GM12878 (cell line): ENCODE measurements at regions of chr13 and their contacts with region 1.

Region 1: DNA sequence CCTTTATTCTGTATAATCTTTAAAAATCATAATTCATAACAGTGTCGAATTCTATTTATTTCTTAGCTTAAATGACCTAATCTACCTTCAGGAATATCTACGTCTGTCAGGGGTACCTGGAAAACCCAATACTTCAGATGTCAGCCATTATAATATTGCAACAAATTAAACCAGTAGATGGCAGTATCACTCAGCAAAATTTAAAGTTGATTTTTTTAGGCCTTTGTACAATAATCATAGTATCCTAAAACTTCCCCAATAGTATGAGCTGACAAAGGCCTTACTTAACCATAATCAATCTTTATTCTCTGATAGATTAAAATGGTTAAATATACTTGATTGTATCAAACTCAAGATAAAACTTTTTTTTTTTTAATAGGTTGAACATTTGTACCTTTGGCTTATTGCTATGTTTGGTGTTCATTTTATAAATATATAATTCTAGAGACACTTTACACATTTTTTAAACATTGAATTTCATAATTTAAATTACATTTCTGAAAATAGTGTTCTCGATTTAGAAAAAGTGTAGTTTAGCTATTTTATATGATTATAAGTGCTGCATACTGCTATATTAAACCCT is 830.2 kb upstream of the SPRY2 start:
- DNase-seq: no peak
- ATAC-seq: peak; percentile 76
- H3K4me3 ChIP-seq: no peak overlapping the region
- H3K27ac ChIP-seq: no peak overlapping the region
- H3K4me1 ChIP-seq: no peaks in the 10 kb centered on the region
- H3K27me3 ChIP-seq: no peaks in the 10 kb centered on the region
- CTCF ChIP-seq: peak; percentile 34 to 56 (median 35); a peak in 4 of 6 replicates
- EP300 ChIP-seq: no peak
- POLR2A ChIP-seq: no peak
- RAD21 ChIP-seq: peak; percentile 49

Region 2: DNA sequence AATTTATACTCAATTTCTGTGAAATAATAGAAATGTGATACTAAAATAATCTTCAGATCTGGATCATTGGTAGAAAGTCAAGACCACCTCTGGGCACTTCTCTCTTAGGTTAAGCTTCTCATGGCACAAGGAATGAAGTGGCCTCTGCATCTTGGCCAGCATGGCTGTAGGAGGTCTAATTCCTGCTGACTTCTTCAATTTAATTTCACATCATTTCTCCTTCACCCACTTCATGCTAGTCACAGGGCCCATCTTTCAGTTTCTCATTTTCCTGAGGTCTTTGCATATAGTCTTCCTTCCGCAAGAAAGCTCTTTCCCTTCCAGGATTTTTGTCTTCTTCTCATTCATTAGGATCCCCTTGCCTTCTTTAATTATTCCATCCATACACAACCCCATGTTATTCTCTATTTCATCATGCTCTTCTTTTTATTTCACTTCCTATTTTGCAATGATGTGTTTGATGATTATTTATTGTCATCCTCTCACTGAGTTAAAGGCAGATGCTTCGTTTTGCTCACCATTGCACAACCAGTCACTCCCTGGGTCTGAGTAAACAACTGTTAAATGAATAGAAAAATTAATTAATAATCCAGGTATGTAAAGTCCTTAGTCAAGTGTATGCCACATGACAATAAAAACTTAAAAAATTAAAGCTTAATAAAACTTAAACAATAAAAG is 1227.7 kb before region 1 on chr13:
- CTCF ChIA-PET with region 1: no interaction called
- POLR2A ChIA-PET with region 1: no interaction called
- RAD21 ChIA-PET with region 1: no interaction called
- SMC1A ChIA-PET with region 1: no interaction called
- in situ Hi-C with region 1: no loop called
- intact Hi-C with region 1: no loop called
- DNase-seq: no peak
- ATAC-seq: no peak
- H3K4me3 ChIP-seq: no peak overlapping the region
- H3K27ac ChIP-seq: no peak overlapping the region
- H3K4me1 ChIP-seq: no peaks in the 10 kb centered on the region
- H3K27me3 ChIP-seq: no peaks in the 10 kb centered on the region
- CTCF ChIP-seq: no peak
- EP300 ChIP-seq: no peak
- POLR2A ChIP-seq: no peak
- RAD21 ChIP-seq: no peak

Region 3: DNA sequence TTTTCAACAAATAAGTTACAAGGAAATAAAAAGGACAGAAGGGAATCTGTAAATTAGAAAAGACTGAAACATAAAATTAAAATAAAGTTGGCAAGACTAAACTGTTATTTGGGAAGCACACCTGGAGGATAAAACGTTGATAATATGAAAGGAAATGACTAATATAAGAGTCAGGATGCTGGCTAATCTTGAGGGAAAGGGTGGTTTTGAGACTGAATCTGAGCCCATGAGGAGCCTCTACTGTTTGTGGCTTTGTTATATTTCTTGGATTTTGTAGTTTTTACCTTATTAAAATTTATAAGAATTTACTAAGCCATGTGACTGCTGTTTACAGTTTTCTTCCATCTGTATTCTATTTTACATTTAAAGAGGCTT is 112.3 kb before region 1 on chr13:
- CTCF ChIA-PET with region 1: interaction called, 17 read pairs
- POLR2A ChIA-PET with region 1: no interaction called
- RAD21 ChIA-PET with region 1: interaction called, 6 read pairs
- SMC1A ChIA-PET with region 1: interaction called, 16 read pairs
- in situ Hi-C with region 1: no loop called
- intact Hi-C with region 1: loop called (anchors 2 kb)
- DNase-seq: no peak
- ATAC-seq: no peak
- H3K4me3 ChIP-seq: no peak overlapping the region
- H3K27ac ChIP-seq: no peak overlapping the region
- H3K4me1 ChIP-seq: no peaks in the 10 kb centered on the region
- H3K27me3 ChIP-seq: no peaks in the 10 kb centered on the region
- CTCF ChIP-seq: no peak
- EP300 ChIP-seq: no peak
- POLR2A ChIP-seq: no peak
- RAD21 ChIP-seq: no peak

Region 4: GRCh38 chr13:81295177-81295576 is 124.0 kb after region 1 on chr13:
- CTCF ChIA-PET with region 1: interaction called, 7 read pairs
- POLR2A ChIA-PET with region 1: no interaction called
- RAD21 ChIA-PET with region 1: no interaction called
- SMC1A ChIA-PET with region 1: interaction called, 18 read pairs
- in situ Hi-C with region 1: no loop called
- intact Hi-C with region 1: no loop called
- DNase-seq: no peak
- ATAC-seq: peak; percentile 26
- H3K4me3 ChIP-seq: no peak overlapping the region
- H3K27ac ChIP-seq: no peak overlapping the region
- H3K4me1 ChIP-seq: no peaks in the 10 kb centered on the region
- H3K27me3 ChIP-seq: no peaks in the 10 kb centered on the region
- CTCF ChIP-seq: no peak
- EP300 ChIP-seq: no peak
- POLR2A ChIP-seq: no peak
- RAD21 ChIP-seq: no peak

Region 5: DNA sequence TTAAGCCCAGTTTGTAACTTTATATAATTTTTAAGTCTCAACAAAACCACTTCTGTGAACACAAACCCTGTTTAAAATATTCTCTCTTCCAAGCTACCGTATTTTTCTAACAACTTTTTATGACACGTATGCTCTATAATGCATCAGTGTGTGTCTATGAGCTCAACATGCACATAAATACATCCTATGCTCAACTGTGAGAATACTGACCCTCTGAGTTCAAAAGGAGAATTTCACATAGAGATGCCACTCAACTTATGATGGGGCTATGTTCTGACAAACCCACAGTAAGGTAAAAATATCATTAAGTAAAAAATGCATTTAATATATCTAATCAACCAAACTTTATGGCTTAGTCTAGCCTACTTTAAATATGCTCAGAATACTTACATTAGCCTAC is 309.5 kb after region 1 on chr13:
- CTCF ChIA-PET with region 1: interaction called, 38 read pairs
- POLR2A ChIA-PET with region 1: no interaction called
- RAD21 ChIA-PET with region 1: interaction called, 30 read pairs
- SMC1A ChIA-PET with region 1: interaction called, 39 read pairs
- in situ Hi-C with region 1: no loop called
- intact Hi-C with region 1: loop called (anchors 5 kb)
- DNase-seq: no peak
- ATAC-seq: peak; percentile 72
- H3K4me3 ChIP-seq: no peak overlapping the region
- H3K27ac ChIP-seq: no peak overlapping the region
- H3K4me1 ChIP-seq: no peaks in the 10 kb centered on the region
- H3K27me3 ChIP-seq: no peaks in the 10 kb centered on the region
- CTCF ChIP-seq: no peak; a peak in 1 of 6 replicates
- EP300 ChIP-seq: no peak
- POLR2A ChIP-seq: no peak
- RAD21 ChIP-seq: no peak

Region 6: DNA sequence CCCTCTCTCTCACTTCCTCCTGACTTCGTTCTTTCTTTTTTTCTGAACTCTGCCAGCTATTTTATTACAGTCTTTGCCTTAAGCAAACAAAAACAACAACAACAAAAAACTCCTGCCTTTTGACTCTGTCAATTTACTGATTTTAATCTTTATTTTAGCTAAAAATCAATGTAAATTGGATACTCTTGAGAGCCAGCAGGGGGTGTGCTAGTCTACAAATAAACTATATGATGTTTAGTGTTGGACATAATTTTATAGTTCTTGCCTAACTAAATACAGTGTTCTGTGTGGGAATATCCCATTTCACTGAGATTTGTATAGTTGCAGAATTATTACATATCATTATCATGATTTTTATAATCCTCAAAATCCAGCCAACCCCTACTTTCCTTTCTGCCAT is 369.6 kb after region 1 on chr13:
- CTCF ChIA-PET with region 1: interaction called, 14 read pairs
- POLR2A ChIA-PET with region 1: no interaction called
- RAD21 ChIA-PET with region 1: no interaction called
- SMC1A ChIA-PET with region 1: interaction called, 11 read pairs
- in situ Hi-C with region 1: no loop called
- intact Hi-C with region 1: no loop called
- DNase-seq: no peak
- ATAC-seq: peak; percentile 54
- H3K4me3 ChIP-seq: no peak overlapping the region
- H3K27ac ChIP-seq: no peak overlapping the region
- H3K4me1 ChIP-seq: no peaks in the 10 kb centered on the region
- H3K27me3 ChIP-seq: no peaks in the 10 kb centered on the region
- CTCF ChIP-seq: peak in 1 of 3 experiments; percentile 31; a peak in 2 of 6 replicates
- EP300 ChIP-seq: no peak
- POLR2A ChIP-seq: no peak
- RAD21 ChIP-seq: no peak

Region 7: GRCh38 chr13:81872581-81872980 is 701.4 kb after region 1 on chr13:
- CTCF ChIA-PET with region 1: interaction called, 26 read pairs
- POLR2A ChIA-PET with region 1: no interaction called
- RAD21 ChIA-PET with region 1: interaction called, 19 read pairs
- SMC1A ChIA-PET with region 1: interaction called, 17 read pairs
- in situ Hi-C with region 1: no loop called
- intact Hi-C with region 1: loop called (anchors 2 kb)
- DNase-seq: no peak
- ATAC-seq: peak; percentile 85
- H3K4me3 ChIP-seq: no peak overlapping the region
- H3K27ac ChIP-seq: no peak overlapping the region
- H3K4me1 ChIP-seq: no peaks in the 10 kb centered on the region
- H3K27me3 ChIP-seq: no peaks in the 10 kb centered on the region
- CTCF ChIP-seq: peak in 2 of 3 experiments; percentile 29 to 48; a peak in 4 of 6 replicates
- EP300 ChIP-seq: no peak
- POLR2A ChIP-seq: no peak
- RAD21 ChIP-seq: peak; percentile 25; the same call in 1 of the 2 replicates

Region 8: DNA sequence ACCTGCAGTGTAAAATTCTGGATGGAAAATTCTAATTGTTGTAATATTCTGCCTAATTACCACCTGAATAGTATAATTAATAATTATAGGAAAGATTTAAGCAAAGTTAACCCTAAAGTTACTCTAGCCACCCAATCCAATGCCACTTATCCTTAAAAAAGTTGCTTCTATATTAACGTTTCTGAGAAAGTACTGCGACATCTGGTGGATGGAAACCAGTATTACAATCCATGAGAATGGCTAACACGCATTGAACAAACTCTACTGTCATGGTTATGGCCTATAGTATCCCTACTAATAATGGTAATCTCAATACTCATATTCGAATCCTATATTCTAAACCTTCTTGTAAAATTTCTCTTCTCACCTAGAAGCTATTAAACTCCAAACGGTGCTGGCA is 1159.3 kb after region 1 on chr13:
- CTCF ChIA-PET with region 1: interaction called, 17 read pairs
- POLR2A ChIA-PET with region 1: no interaction called
- RAD21 ChIA-PET with region 1: interaction called, 5 read pairs
- SMC1A ChIA-PET with region 1: interaction called, 8 read pairs
- in situ Hi-C with region 1: loop called (anchors 10 kb)
- intact Hi-C with region 1: loop called (anchors 2 kb)
- DNase-seq: no peak
- ATAC-seq: peak; percentile 77
- H3K4me3 ChIP-seq: no peak overlapping the region
- H3K27ac ChIP-seq: no peak overlapping the region
- H3K4me1 ChIP-seq: no peaks in the 10 kb centered on the region
- H3K27me3 ChIP-seq: no peaks in the 10 kb centered on the region
- CTCF ChIP-seq: peak; percentile 48 to 58 (median 52)
- EP300 ChIP-seq: no peak
- POLR2A ChIP-seq: no peak
- RAD21 ChIP-seq: peak; percentile 32; the same call in 1 of the 2 replicates